A549 (cell line): ENCODE measurements at regions of chr16 and their contacts with region 1.

Region 1: DNA sequence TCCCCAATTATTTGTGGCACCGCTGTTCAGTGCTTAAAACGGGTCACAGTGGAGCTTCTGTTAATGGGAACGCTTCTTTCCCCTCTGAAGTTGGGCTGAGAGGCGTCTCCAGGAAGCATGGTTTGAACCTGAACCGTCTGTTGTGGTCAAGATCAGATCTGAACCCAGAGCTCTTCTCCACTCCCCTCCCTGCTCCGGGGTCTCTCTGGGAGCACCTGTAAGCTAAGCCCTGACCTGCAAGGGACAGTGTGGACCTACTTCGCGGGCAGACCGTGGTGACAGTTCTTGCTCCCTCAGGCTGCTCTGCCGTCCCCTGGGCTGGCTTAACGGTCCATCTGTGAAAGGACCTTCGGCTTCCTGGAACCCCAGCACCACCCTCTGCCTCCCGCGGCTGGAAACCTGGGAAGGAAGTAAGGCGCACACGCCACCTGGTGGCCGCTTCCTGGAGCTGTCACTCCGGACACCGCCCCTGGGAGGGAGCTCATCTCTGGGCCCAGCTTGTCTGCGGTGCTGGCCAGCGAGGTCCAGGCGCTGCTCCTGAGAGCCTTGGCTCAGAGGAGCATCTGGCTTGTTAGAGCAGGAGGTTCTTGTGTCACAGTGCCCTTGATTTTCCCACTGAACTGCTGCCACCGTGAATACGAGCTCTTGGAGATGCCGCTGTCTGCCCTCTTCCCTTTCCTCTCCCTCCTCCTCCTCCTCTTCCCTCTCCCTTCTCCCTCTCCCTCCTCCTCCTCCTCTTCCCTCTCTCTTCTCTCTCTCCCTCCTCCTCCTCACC is 518.5 kb upstream of the EEF2KMT start:
- DNase-seq: peak; percentile 58
- ATAC-seq: peak; percentile 90 to 99
- H3K4me3 ChIP-seq: no peak overlapping the region
- H3K27ac ChIP-seq: no peak overlapping the region
- H3K4me1 ChIP-seq: no peaks in the 10 kb centered on the region
- CTCF ChIP-seq: peak; percentile 59
- EP300 ChIP-seq: no peak
- POLR2A ChIP-seq: no peak
- RAD21 ChIP-seq: peak; percentile 47 to 56

Region 2: DNA sequence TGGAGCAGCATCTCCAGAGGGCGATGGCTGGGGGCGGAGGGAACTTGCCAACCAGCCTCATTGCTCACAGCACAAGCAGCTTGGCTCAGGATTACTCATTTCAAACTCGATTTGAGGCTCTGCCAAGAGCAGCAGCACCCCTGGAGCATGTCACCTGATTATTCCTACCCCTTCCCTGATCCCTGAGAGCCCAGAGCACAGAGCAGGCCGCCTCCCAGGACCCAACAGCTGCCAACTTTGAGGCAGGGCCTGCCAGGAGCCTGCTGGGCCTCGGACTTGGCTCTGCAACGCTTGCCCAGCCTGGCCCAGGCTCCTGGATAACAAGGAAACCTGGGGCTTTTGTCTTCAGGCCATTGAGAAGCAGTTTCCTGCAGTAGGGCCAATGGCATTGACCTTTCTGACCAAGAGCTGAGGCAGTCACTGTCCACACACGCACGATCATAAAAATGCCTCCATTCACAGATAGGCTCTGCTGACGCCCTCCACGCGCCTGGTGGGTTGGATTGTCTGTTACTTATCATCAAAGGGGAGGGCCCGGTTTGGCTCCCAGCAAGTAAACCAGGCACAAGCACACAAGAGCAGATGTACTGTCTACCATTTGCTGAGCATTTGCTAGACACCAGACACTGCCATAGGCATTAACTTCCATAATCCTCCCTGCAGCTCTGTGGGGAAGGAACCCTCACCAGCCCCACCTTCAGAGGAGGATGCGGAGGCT is 111.8 kb before region 1 on chr16:
- CTCF ChIA-PET with region 1: interaction called, 10 read pairs
- POLR2A ChIA-PET with region 1: no interaction called
- DNase-seq: no peak
- ATAC-seq: no peak
- H3K4me3 ChIP-seq: no peak overlapping the region
- H3K27ac ChIP-seq: no peak overlapping the region
- H3K4me1 ChIP-seq: no peaks in the 10 kb centered on the region
- CTCF ChIP-seq: no peak
- EP300 ChIP-seq: no peak
- POLR2A ChIP-seq: no peak
- RAD21 ChIP-seq: no peak

Region 3: GRCh38 chr16:5633845-5634440 is 17.9 kb after region 1 on chr16:
- CTCF ChIA-PET with region 1: interaction called, 31 read pairs
- POLR2A ChIA-PET with region 1: no interaction called
- DNase-seq: peak; percentile 45 to 51
- ATAC-seq: peak; percentile 34 to 63; a peak in 3 of 6 replicates
- H3K4me3 ChIP-seq: no peak overlapping the region
- H3K27ac ChIP-seq: no peak overlapping the region
- H3K4me1 ChIP-seq: no peaks in the 10 kb centered on the region
- CTCF ChIP-seq: peak; percentile 44
- EP300 ChIP-seq: no peak
- POLR2A ChIP-seq: no peak
- RAD21 ChIP-seq: peak; percentile 14 to 32; a peak in 1 of 5 replicates